Sigmoid colon (tissue), 7 donors: ENCODE measurements at regions of chr16 and their contacts with region 1.

Region 1: GRCh38 chr16:71412270-71413160 is 29.3 kb downstream of the TLE7 start:
- DNase-seq: no peak
- H3K4me3 ChIP-seq: no peak overlapping the region
- H3K27ac ChIP-seq: no peak overlapping the region
- H3K4me1 ChIP-seq: peaks cover 0 to 6% (median 0%) of the 10 kb centered on the region in 4 donors
- H3K27me3 ChIP-seq: peaks cover 5 to 28% (median 7%) of the 10 kb centered on the region in 3 donors
- CTCF ChIP-seq: peak; percentile 53 to 85 (median 75)
- EP300 ChIP-seq: no peak
- POLR2A ChIP-seq: no peak

Region 2: GRCh38 chr16:71499775-71500364 is 87.4 kb after region 1 on chr16:
- intact Hi-C with region 1: loop called (anchors 1 kb)
- DNase-seq: no peak
- H3K4me3 ChIP-seq: no peak overlapping the region
- H3K27ac ChIP-seq: no peak overlapping the region
- H3K4me1 ChIP-seq: no peaks in the 10 kb centered on the region
- H3K27me3 ChIP-seq: no peaks in the 10 kb centered on the region
- CTCF ChIP-seq: peak; percentile 15 to 59 (median 58)
- EP300 ChIP-seq: no peak
- POLR2A ChIP-seq: no peak

Region 3: GRCh38 chr16:71610936-71611871 is 198.7 kb after region 1 on chr16:
- intact Hi-C with region 1: loop called (anchors 2 kb)
- DNase-seq: no peak
- H3K4me3 ChIP-seq: no peak overlapping the region
- H3K27ac ChIP-seq: no peak overlapping the region
- H3K4me1 ChIP-seq: no peaks in the 10 kb centered on the region
- H3K27me3 ChIP-seq: peaks cover 0 to 35% (median 0%) of the 10 kb centered on the region in 3 donors
- CTCF ChIP-seq: peak; percentile 33 to 75 (median 42)
- EP300 ChIP-seq: no peak
- POLR2A ChIP-seq: no peak